PC-3 (cell line): ENCODE measurements at regions of chr2 and their contacts with region 1.

Region 1: GRCh38 chr2:152189622-152190495 is 14.3 kb upstream of the STAM2 start:
- DNase-seq: peak; percentile 80
- ATAC-seq: peak; percentile 86
- H3K4me3 ChIP-seq: no peak overlapping the region
- H3K27ac ChIP-seq: no peak overlapping the region
- H3K4me1 ChIP-seq: no peaks in the 10 kb centered on the region
- H3K27me3 ChIP-seq: no peaks in the 10 kb centered on the region
- CTCF ChIP-seq: peak; percentile 90

Region 2: GRCh38 chr2:152307863-152308262 is 118.0 kb after region 1 on chr2:
- CTCF ChIA-PET with region 1: no interaction called
- POLR2A ChIA-PET with region 1: no interaction called
- intact Hi-C with region 1: loop called (anchors 1 kb)
- DNase-seq: peak; percentile 12
- ATAC-seq: peak; percentile 7; the same call in 1 of the 2 replicates
- H3K4me3 ChIP-seq: no peak overlapping the region
- H3K27ac ChIP-seq: no peak overlapping the region
- H3K4me1 ChIP-seq: peaks cover 24% of the 10 kb centered on the region
- H3K27me3 ChIP-seq: no peaks in the 10 kb centered on the region
- CTCF ChIP-seq: no peak

Region 3: DNA sequence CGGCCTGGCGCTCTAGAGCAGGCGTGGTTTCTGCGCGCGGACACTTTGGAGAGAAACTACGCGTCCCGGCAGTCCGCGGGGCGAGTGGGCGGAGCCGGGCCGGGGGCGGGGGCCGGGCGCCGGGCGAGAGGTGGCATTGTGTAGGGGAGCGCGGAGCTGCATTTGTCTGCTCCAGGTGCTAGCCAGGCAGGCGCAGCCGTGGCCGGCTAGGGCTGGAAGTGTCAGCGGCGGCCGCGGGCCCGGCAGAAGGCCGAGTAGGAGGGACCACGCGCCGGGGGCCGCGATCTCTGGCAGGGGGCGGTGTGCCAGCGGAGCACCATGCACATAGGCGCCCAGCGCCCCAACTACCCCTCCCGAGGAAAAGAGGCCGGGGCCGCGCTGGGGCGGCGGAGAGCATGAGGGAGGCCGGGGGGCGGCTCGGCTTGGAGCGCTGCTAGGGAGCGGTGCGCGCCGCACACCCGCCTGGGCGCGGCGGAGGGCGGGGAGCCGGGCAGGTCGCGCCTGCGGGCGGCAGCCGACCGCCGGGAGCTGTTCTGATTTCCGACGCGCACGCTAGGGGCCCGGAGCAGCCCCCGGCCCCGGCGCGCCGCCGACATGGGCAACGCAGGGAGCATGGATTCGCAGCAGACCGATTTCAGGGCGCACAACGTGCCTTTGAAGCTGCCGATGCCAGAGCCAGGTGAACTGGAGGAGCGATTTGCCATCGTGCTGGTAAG is 145.3 kb after region 1 on chr2 and contains the start of gene FMNL2:
- CTCF ChIA-PET with region 1: no interaction called
- POLR2A ChIA-PET with region 1: no interaction called
- intact Hi-C with region 1: loop called (anchors 1 kb)
- DNase-seq: peak; percentile 84
- ATAC-seq: peak; percentile 80
- H3K4me3 ChIP-seq: peak within 1 kb of the TSS; percentile 84
- H3K27ac ChIP-seq: no peak within 1 kb of the TSS
- H3K4me1 ChIP-seq: peaks cover 33% of the 10 kb centered on the region
- H3K27me3 ChIP-seq: no peaks in the 10 kb centered on the region
- CTCF ChIP-seq: no peak
- total RNA-seq, gene FMNL2: 15.6 and 15.8 TPM in 2 replicates

Region 4: GRCh38 chr2:152558158-152558984 is 368.5 kb after region 1 on chr2:
- CTCF ChIA-PET with region 1: no interaction called
- POLR2A ChIA-PET with region 1: no interaction called
- intact Hi-C with region 1: loop called (anchors 1 kb)
- DNase-seq: peak; percentile 72
- ATAC-seq: peak; percentile 8; the same call in 1 of the 2 replicates
- H3K4me3 ChIP-seq: no peak overlapping the region
- H3K27ac ChIP-seq: peak overlapping the region; percentile 47
- H3K4me1 ChIP-seq: peaks cover 59% of the 10 kb centered on the region
- H3K27me3 ChIP-seq: no peaks in the 10 kb centered on the region
- CTCF ChIP-seq: no peak

Region 5: GRCh38 chr2:152627351-152627957 is 437.6 kb after region 1 on chr2:
- CTCF ChIA-PET with region 1: interaction called, 11 read pairs
- POLR2A ChIA-PET with region 1: no interaction called
- intact Hi-C with region 1: loop called (anchors 1 kb)
- DNase-seq: peak; percentile 54
- ATAC-seq: peak; percentile 59; the same call in 1 of the 2 replicates
- H3K4me3 ChIP-seq: no peak overlapping the region
- H3K27ac ChIP-seq: no peak overlapping the region
- H3K4me1 ChIP-seq: no peaks in the 10 kb centered on the region
- H3K27me3 ChIP-seq: no peaks in the 10 kb centered on the region
- CTCF ChIP-seq: peak; percentile 80

Region 6: DNA sequence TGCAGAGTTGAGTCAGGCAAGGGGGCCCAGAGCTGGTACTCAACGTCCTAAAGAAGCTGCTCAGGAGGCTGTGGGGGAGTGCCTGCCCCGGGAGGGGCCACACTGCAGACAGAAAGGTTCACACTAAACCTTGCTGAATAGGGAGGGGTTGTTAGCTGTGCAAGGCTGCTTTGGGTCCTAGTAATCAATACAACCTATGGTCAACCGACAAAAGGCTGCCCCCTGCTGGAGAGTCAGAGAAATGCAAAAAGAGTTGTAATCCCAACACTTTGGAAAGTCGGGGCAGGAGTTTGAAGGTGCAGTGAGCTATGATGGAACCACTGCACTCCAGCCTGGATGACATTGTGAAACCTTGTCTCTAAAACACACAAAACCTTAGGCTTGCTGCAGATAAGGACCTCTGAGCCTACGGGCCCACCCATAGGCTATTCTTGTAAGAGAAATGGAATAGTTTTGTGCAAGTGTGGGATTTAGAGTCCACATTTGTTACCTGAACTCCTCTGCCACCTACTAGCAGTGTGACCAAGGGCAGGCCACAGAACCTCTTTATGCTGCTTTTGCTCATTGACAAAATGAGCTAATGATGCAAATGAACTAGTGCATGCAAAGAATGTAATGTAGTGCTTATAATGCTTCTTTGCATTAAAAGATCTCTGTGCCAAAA is 445.9 kb after region 1 on chr2:
- CTCF ChIA-PET with region 1: interaction called, 3 read pairs
- POLR2A ChIA-PET with region 1: no interaction called
- intact Hi-C with region 1: loop called (anchors 1 kb)
- DNase-seq: peak; percentile 69
- ATAC-seq: peak; percentile 84
- H3K4me3 ChIP-seq: no peak overlapping the region
- H3K27ac ChIP-seq: no peak overlapping the region
- H3K4me1 ChIP-seq: no peaks in the 10 kb centered on the region
- H3K27me3 ChIP-seq: no peaks in the 10 kb centered on the region
- CTCF ChIP-seq: peak; percentile 85